ENCODE measurements at regions of chr6 and their contacts with region 1.

Region 1: DNA sequence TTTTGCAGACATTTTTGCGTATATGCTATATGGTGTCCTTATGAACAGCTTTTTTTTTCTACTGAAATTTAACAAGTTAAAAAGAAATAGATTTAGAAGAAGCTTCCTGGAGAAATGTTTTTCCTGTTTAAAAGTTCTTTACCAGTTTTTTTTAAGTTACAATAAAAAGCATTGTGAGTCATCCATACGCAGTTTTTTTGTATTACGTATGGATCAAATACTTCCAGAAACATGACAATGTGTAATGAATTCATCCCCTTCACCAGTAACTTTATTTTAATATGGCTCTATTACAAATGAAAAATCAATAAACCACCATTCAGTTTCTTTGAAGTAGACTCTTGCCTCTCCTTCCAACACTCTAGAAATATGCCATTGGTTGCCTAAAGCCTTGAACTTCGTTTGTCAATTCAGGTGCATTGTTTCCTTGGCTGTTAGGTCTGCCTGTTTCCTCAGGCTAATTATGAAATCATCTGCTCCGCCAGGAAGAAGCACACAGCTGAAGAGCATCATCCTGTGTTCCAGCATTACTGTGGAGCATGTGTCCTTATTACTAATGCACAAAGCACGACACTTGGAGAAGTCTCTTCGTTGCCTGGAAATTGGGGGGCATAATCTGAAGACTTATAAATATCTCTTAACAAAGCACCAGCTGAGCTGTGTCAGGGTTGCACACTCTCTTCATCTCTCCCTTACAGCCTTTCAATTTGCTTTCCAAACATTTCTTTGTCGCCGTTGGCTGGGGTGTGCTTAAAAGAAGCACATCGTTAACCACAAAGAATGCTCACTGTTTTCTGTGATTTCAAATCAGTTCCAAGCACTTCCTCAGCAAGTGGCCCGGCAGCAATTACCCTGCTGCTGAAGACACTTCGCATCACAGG is 9.6 kb downstream of the MOXD1 start:
- DNase-seq: no peak
- ATAC-seq: no peak
- H3K4me3 ChIP-seq: no peak overlapping the region
- H3K4me3 Mint-ChIP-seq: no peak overlapping the region
- H3K27ac ChIP-seq: no peak overlapping the region
- H3K27ac Mint-ChIP-seq: no peak overlapping the region
- H3K4me1 ChIP-seq: peaks cover 5 to 27% of the 10 kb centered on the region in 2 donors
- H3K4me1 Mint-ChIP-seq: peaks cover 27% of the 10 kb centered on the region
- H3K27me3 ChIP-seq: no peaks in the 10 kb centered on the region
- H3K27me3 Mint-ChIP-seq: no peaks in the 10 kb centered on the region
- CTCF ChIP-seq: no peak

Region 2: GRCh38 chr6:132063738-132064137 is 327.9 kb before region 1 on chr6:
- CTCF ChIA-PET with region 1: no interaction called
- POLR2A ChIA-PET with region 1: no interaction called
- intact Hi-C with region 1: no loop called
- DNase-seq: no peak
- ATAC-seq: no peak
- H3K4me3 ChIP-seq: no peak overlapping the region
- H3K4me3 Mint-ChIP-seq: no peak overlapping the region
- H3K27ac ChIP-seq: no peak overlapping the region
- H3K27ac Mint-ChIP-seq: no peak overlapping the region
- H3K4me1 ChIP-seq: no peaks in the 10 kb centered on the region
- H3K4me1 Mint-ChIP-seq: peaks cover 5% of the 10 kb centered on the region
- H3K27me3 ChIP-seq: no peaks in the 10 kb centered on the region
- H3K27me3 Mint-ChIP-seq: no peaks in the 10 kb centered on the region
- CTCF ChIP-seq: no peak

Region 3: GRCh38 chr6:132286026-132287019 is 105.3 kb before region 1 on chr6:
- CTCF ChIA-PET with region 1: interaction called, 126 read pairs
- POLR2A ChIA-PET with region 1: no interaction called
- intact Hi-C with region 1: no loop called
- DNase-seq: peak; percentile 84
- ATAC-seq: peak; percentile 88
- H3K4me3 ChIP-seq: no peak overlapping the region
- H3K4me3 Mint-ChIP-seq: peak overlapping the region; percentile 52
- H3K27ac ChIP-seq: no peak overlapping the region
- H3K27ac Mint-ChIP-seq: peak overlapping the region; percentile 37
- H3K4me1 ChIP-seq: peaks cover 11 to 16% of the 10 kb centered on the region in 2 donors
- H3K4me1 Mint-ChIP-seq: peaks cover 18% of the 10 kb centered on the region
- H3K27me3 ChIP-seq: no peaks in the 10 kb centered on the region
- H3K27me3 Mint-ChIP-seq: no peaks in the 10 kb centered on the region
- CTCF ChIP-seq: no peak

Region 4: GRCh38 chr6:132333639-132334520 is 57.8 kb before region 1 on chr6:
- CTCF ChIA-PET with region 1: interaction called, 14 read pairs
- POLR2A ChIA-PET with region 1: no interaction called
- intact Hi-C with region 1: no loop called
- DNase-seq: no peak
- ATAC-seq: no peak
- H3K4me3 ChIP-seq: no peak overlapping the region
- H3K4me3 Mint-ChIP-seq: no peak overlapping the region
- H3K27ac ChIP-seq: no peak overlapping the region
- H3K27ac Mint-ChIP-seq: no peak overlapping the region
- H3K4me1 ChIP-seq: no peaks in the 10 kb centered on the region
- H3K4me1 Mint-ChIP-seq: peaks cover 5% of the 10 kb centered on the region
- H3K27me3 ChIP-seq: no peaks in the 10 kb centered on the region
- H3K27me3 Mint-ChIP-seq: peaks cover 5% of the 10 kb centered on the region
- CTCF ChIP-seq: no peak

Region 5: GRCh38 chr6:132424827-132425575 is 33.4 kb after region 1 on chr6:
- CTCF ChIA-PET with region 1: no interaction called
- POLR2A ChIA-PET with region 1: no interaction called
- intact Hi-C with region 1: no loop called
- DNase-seq: no peak
- ATAC-seq: no peak
- H3K4me3 ChIP-seq: no peak overlapping the region
- H3K4me3 Mint-ChIP-seq: no peak overlapping the region
- H3K27ac ChIP-seq: no peak overlapping the region
- H3K27ac Mint-ChIP-seq: no peak overlapping the region
- H3K4me1 ChIP-seq: no peaks in the 10 kb centered on the region
- H3K4me1 Mint-ChIP-seq: no peaks in the 10 kb centered on the region
- H3K27me3 ChIP-seq: peaks cover 0 to 5% (median 2%) of the 10 kb centered on the region in 4 experiments
- H3K27me3 Mint-ChIP-seq: peaks cover 8% of the 10 kb centered on the region
- CTCF ChIP-seq: no peak

Measured in B cell (primary cell).